Psoas muscle (tissue), 8 donors: ENCODE measurements at regions of chr5 and their contacts with region 1.

Region 1: GRCh38 chr5:158957598-158957997 is 142.1 kb downstream of the EBF1 start:
- DNase-seq: no peak
- ATAC-seq: no peak
- H3K4me3 ChIP-seq: no peak overlapping the region
- H3K27ac ChIP-seq: no peak overlapping the region
- H3K4me1 ChIP-seq: peaks cover 3% of the 10 kb centered on the region
- H3K27me3 ChIP-seq: peaks cover 0 to 5% (median 0%) of the 10 kb centered on the region in 3 donors
- CTCF ChIP-seq: no peak

Region 2: DNA sequence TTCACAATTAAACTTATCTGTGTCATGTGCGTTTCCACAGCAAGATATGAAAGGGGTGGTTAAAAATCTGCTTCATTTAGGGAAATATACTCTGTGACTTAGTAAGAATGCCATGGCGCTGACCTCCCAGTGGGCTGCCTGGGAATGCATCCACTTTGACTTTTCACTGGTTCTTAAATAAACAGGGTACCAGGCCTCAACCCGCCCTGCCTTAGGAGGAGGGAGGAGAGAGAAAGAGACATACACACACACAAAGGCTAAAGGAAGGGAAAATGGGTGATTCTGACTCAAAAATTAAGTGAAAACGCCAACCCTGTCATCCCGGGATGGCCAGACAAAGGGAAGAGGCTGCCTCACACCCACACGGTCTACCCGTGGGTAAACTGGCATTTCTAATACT is 20.0 kb after region 1 on chr5:
- intact Hi-C with region 1: loop called in 1 of 2 experiments (anchors 1 kb)
- DNase-seq: no peak
- ATAC-seq: no peak
- H3K4me3 ChIP-seq: no peak overlapping the region
- H3K27ac ChIP-seq: no peak overlapping the region
- H3K4me1 ChIP-seq: peaks cover 4% of the 10 kb centered on the region
- H3K27me3 ChIP-seq: no peaks in the 10 kb centered on the region
- CTCF ChIP-seq: no peak

Region 3: GRCh38 chr5:159402311-159402710 is 444.7 kb after region 1 on chr5:
- intact Hi-C with region 1: no loop called
- DNase-seq: no peak
- ATAC-seq: no peak
- H3K4me3 ChIP-seq: no peak overlapping the region
- H3K27ac ChIP-seq: no peak overlapping the region
- H3K4me1 ChIP-seq: no peaks in the 10 kb centered on the region
- H3K27me3 ChIP-seq: no peaks in the 10 kb centered on the region
- CTCF ChIP-seq: no peak

Region 4: DNA sequence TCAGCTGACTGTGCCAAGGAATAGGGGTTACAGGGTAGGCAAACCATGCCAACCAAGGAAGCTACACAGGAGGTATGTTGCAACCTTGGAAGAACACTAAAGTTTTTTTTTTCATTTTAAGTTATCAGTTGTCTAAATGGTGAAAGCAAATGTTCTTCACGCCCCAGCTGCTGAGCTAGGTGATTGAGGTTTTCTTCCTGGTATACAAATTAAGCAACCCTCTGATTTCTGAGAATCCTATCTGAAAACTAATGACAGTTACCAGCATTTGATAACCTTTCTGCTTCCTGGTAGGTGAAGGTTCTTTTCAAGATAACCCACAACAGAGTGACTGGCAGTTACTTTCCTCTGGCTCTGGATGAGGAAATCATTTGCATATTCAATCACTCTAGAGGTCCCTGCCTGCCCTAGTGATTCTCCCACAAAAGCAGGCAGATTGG is 1699.5 kb after region 1 on chr5:
- intact Hi-C with region 1: no loop called
- DNase-seq: no peak
- ATAC-seq: no peak
- H3K4me3 ChIP-seq: no peak overlapping the region
- H3K27ac ChIP-seq: no peak overlapping the region
- H3K4me1 ChIP-seq: no peaks in the 10 kb centered on the region
- H3K27me3 ChIP-seq: no peaks in the 10 kb centered on the region
- CTCF ChIP-seq: no peak